ENCODE measurements at regions of chr2 and their contacts with region 1.

Region 1: DNA sequence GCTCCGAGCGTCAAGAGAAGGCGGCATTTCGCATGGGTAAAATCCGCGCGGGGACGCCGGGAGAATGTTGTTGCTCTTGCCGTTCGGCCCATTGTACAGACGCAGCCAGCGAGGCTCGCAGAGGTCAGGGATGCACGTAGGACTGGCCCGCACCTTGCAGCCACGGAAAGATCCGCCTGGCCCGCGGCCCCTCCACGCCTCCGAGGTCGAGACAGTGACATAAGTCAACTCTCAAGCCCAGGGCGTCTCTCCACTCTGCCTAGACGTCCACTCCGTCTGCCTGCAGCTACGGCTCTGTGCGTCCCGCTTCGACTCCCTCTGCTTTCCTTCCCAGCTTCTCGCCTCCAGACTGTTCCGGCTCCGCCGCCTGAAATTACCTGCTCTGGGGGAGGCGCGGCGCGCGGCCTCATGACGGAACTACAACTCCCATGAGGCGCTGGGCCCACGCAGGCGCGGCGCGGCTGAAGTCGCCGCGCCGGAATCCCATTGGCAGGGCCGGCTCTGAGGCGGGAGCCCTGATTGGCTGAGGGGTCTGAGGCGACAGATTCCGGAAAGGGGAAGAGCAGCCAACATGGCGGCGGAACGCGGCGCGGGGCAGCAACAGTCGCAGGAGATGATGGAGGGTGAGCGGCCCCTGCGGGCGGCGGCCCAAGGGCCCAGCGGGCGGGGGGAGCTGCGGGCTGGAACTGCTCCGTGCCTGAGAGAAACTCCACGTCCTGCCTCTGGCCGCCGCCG is at the start of gene PPP1R7:
- DNase-seq: peak; percentile 94
- H3K4me3 Mint-ChIP-seq: peak within 1 kb of the TSS; percentile 86
- H3K27ac Mint-ChIP-seq: peak within 1 kb of the TSS; percentile 62
- H3K4me1 Mint-ChIP-seq: peaks cover 27% of the 10 kb centered on the region
- H3K27me3 Mint-ChIP-seq: no peaks in the 10 kb centered on the region
- CTCF ChIP-seq: no peak
- total RNA-seq, gene PPP1R7: 65.4 and 65.5 TPM in 2 replicates

Region 2: DNA sequence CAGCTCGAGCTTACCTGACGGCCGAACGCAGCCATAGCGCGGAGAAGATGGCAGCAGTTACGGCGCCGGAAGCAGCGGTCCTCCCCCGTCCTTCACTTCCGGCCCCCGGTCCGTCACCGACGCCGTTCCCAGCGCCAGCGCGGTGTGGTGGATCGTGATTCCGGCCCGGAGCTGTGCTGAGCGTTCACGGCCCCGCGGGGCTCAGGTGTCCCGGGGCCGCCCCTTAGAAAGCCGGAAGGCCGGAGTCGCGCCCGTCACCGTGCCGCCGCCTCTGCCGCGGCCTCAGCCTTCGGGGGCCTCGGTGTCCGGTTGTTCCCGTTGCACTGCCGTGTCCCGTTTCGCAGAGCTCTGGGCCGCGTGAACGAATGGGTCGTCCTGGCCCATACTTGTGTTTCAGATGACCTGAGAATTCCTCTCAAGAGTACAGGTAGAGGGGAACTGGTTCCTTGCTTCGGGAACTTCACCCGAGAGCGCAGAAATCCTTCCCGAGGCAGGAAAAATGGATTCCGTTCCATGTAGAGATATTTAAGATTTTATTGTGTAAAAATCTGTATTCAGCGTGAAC is 47.8 kb before region 1 on chr2 and contains the start of gene MTERF4:
- CTCF ChIA-PET with region 1: interaction called, 4 read pairs
- intact Hi-C with region 1: loop called (anchors 5 kb)
- DNase-seq: peak; percentile 94
- H3K4me3 Mint-ChIP-seq: peak within 1 kb of the TSS; percentile 96
- H3K27ac Mint-ChIP-seq: peak within 1 kb of the TSS; percentile 85
- H3K4me1 Mint-ChIP-seq: no peaks in the 10 kb centered on the region
- H3K27me3 Mint-ChIP-seq: no peaks in the 10 kb centered on the region
- CTCF ChIP-seq: no peak
- total RNA-seq, gene MTERF4: 30.8 and 33.6 TPM in 2 replicates